ENCODE measurements at regions of chr2 and their contacts with region 1.

Region 1: GRCh38 chr2:38581193-38582147 is 21.3 kb downstream of the HNRNPLL start:
- DNase-seq: no peak
- ATAC-seq: peak; percentile 71
- H3K4me3 Mint-ChIP-seq: no peak overlapping the region
- H3K27ac Mint-ChIP-seq: no peak overlapping the region
- H3K4me1 Mint-ChIP-seq: no peaks in the 10 kb centered on the region
- H3K27me3 Mint-ChIP-seq: peaks cover 15% of the 10 kb centered on the region
- CTCF ChIP-seq: no peak

Region 2: DNA sequence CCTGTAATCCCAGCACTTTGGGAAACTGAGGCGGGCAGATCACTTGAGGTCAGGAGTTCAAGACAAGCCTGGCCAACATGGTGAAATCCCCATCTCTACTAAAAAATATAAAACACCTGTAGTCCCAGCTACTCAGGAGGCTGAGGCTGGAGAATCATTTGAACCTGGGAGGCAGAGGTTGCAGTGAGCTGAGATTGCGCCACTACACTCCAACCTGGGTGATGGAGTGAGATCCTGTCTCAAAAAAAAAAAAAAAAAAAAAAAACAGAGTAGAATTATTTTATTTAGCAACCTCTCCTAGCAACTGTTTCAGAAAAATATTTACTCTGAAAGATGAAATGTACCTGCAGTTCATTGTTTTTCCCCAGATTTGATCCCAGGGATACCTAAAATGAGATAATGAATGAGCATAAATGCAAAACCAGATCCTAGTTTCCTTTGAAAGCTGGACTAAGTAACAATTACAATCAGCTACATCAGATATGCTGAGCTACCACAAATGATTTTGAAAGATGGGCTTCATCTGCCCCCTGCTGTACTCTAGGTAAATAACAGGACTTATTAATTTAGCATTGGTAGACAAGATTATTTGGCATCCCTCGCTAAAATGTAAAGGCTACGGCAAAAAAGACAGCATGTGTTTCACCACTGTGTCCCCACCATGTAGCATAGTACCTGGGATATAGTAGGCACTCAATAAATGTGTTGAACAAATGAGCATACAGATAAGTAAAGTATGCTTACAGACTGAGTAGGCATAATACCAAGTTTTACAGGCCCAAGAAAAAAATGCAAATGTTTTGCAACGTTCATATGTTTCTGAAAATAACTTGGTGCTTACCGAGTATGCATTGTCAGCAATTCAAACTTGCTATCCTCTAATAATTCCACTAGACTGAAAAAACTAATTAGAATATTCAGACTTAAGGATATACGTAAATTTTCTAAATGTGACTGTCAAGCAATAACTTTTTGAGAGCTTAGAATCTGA is 306.9 kb before region 1 on chr2:
- CTCF ChIA-PET with region 1: no interaction called
- POLR2A ChIA-PET with region 1: no interaction called
- intact Hi-C with region 1: no loop called
- DNase-seq: no peak
- ATAC-seq: peak; percentile 56
- H3K4me3 Mint-ChIP-seq: no peak overlapping the region
- H3K27ac Mint-ChIP-seq: no peak overlapping the region
- H3K4me1 Mint-ChIP-seq: peaks cover 3% of the 10 kb centered on the region
- H3K27me3 Mint-ChIP-seq: no peaks in the 10 kb centered on the region
- CTCF ChIP-seq: no peak

Region 3: GRCh38 chr2:38315707-38316333 is 265.6 kb before region 1 on chr2:
- CTCF ChIA-PET with region 1: interaction called, 9 read pairs
- POLR2A ChIA-PET with region 1: no interaction called
- intact Hi-C with region 1: loop called (anchors 5 kb)
- DNase-seq: no peak
- ATAC-seq: peak; percentile 28
- H3K4me3 Mint-ChIP-seq: no peak overlapping the region
- H3K27ac Mint-ChIP-seq: no peak overlapping the region
- H3K4me1 Mint-ChIP-seq: no peaks in the 10 kb centered on the region
- H3K27me3 Mint-ChIP-seq: no peaks in the 10 kb centered on the region
- CTCF ChIP-seq: peak; percentile 40

Region 4: GRCh38 chr2:38602732-38603401 is 21.4 kb after region 1 on chr2 and contains the start of gene HNRNPLL:
- CTCF ChIA-PET with region 1: interaction called, 11 read pairs
- POLR2A ChIA-PET with region 1: interaction called, 3 read pairs
- intact Hi-C with region 1: loop called (anchors 2 kb)
- DNase-seq: peak; percentile 84
- ATAC-seq: peak; percentile 87
- H3K4me3 Mint-ChIP-seq: peak within 1 kb of the TSS; percentile 89
- H3K27ac Mint-ChIP-seq: peak within 1 kb of the TSS; percentile 65
- H3K4me1 Mint-ChIP-seq: peaks cover 20% of the 10 kb centered on the region
- H3K27me3 Mint-ChIP-seq: peaks cover 38% of the 10 kb centered on the region
- CTCF ChIP-seq: no peak
- total RNA-seq, gene HNRNPLL: 8.6 and 8.8 TPM in 2 replicates

Region 5: DNA sequence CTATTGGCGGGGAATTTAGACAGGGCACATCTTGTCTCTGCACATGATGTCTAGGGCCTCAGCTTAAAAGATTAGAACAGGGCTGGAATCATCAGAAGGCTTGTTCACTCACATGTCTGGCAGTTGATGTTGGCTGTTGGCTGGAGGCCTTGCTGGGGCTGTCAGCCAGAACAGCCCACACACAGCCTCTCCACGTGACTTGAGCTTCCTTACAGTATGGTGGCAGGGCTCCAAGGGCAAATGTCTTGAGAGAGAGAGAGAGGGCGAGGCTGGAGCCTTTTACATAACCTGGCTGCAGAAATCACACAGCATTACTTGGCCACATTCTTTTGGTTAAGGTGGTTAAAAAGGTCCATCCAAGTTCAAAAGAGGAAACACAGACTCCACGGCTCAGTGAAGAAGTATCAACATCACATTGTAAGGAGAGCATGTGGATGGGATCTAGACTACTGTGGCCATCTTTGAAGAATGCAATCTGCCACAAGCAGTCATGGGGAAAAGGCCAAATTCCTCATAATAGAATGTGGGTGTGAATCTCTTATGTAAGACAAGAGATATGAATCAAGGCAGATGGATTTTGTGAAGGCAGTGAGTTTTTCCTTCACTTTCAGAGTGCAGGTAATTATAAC is 139.3 kb after region 1 on chr2:
- CTCF ChIA-PET with region 1: interaction called, 25 read pairs
- POLR2A ChIA-PET with region 1: no interaction called
- intact Hi-C with region 1: loop called (anchors 1 kb)
- DNase-seq: no peak
- ATAC-seq: no peak
- H3K4me3 Mint-ChIP-seq: no peak overlapping the region
- H3K27ac Mint-ChIP-seq: no peak overlapping the region
- H3K4me1 Mint-ChIP-seq: peaks cover 32% of the 10 kb centered on the region
- H3K27me3 Mint-ChIP-seq: no peaks in the 10 kb centered on the region
- CTCF ChIP-seq: no peak

Region 6: GRCh38 chr2:38740851-38741731 is 159.6 kb after region 1 on chr2:
- CTCF ChIA-PET with region 1: interaction called, 75 read pairs
- POLR2A ChIA-PET with region 1: interaction called, 3 read pairs
- intact Hi-C with region 1: loop called (anchors 1 kb)
- DNase-seq: no peak
- ATAC-seq: peak; percentile 18
- H3K4me3 Mint-ChIP-seq: no peak overlapping the region
- H3K27ac Mint-ChIP-seq: peak overlapping the region; percentile 61
- H3K4me1 Mint-ChIP-seq: peaks cover 29% of the 10 kb centered on the region
- H3K27me3 Mint-ChIP-seq: no peaks in the 10 kb centered on the region
- CTCF ChIP-seq: no peak

Region 7: DNA sequence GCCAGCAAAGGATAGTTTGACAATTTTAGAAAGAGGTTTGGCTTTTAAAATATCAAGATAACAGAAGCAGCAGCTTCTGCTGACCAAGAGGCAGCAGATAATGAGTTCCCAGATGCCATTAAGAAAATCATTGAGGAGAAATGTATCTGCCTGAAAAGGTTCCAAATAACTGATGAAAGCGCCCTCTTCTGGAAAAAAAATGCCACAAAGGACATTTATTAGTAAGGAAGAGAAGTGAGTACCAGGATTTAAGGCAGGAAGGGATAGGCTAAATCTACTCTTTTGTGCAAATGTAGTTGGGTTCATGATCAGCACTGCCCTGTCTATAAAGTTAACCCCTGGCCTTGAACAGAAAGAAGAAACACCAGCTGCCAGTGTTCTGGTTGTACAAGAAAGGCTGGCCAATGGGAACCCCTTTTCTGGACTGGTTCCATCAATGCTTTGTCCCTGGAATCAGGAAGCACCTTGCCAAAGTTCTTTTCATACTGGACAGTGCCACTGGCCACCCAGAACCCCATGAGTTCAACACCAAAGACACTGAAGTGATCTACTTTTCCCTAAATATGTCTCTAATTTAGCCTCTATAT is 253.6 kb after region 1 on chr2:
- CTCF ChIA-PET with region 1: interaction called, 6 read pairs
- POLR2A ChIA-PET with region 1: no interaction called
- intact Hi-C with region 1: loop called (anchors 5 kb)
- DNase-seq: no peak
- ATAC-seq: no peak
- H3K4me3 Mint-ChIP-seq: no peak overlapping the region
- H3K27ac Mint-ChIP-seq: peak overlapping the region; percentile 93
- H3K4me1 Mint-ChIP-seq: peaks cover 40% of the 10 kb centered on the region
- H3K27me3 Mint-ChIP-seq: no peaks in the 10 kb centered on the region
- CTCF ChIP-seq: no peak

Region 8: DNA sequence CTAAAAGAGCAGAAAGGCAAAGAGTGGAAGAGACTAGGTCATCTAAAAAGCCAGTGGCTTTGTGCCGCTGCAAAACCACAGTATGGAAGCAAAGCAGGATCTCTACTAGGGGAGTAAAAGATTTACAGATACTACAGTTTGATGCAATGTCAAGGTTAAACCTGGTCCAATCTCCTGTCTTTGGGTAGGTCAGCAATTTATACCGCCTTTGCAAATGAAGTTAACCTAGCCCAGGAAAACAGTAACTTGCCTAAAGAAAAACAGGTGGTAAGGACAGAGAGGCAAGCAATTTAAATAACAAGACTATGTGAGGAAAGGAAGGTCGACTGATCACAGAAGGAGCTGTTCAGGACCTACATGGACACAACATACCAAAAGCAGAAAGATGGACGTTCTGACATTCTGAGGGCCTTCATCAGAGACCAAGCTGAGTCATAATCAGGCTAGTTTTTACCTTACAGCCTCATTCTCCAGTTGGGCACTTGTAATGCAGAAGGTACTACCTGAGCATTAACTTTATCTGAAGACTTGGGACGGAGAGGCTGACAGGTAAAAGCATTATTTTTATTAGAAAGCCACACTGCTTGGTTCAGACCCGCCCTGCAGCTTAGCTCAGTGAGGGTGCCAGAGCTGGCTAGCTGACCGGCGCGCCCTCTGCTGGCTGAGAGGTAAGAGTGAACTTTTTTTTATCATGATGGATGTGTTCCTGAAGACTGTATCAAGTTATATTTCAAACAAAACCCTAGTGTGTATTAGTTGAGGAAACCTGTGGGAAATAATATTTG is 646.4 kb after region 1 on chr2:
- CTCF ChIA-PET with region 1: interaction called, 9 read pairs
- POLR2A ChIA-PET with region 1: no interaction called
- intact Hi-C with region 1: loop called (anchors 1 kb)
- DNase-seq: peak; percentile 69
- ATAC-seq: peak; percentile 87
- H3K4me3 Mint-ChIP-seq: peak overlapping the region; percentile 73
- H3K27ac Mint-ChIP-seq: no peak overlapping the region
- H3K4me1 Mint-ChIP-seq: peaks cover 15% of the 10 kb centered on the region
- H3K27me3 Mint-ChIP-seq: no peaks in the 10 kb centered on the region
- CTCF ChIP-seq: peak; percentile 86

Region 9: GRCh38 chr2:39379643-39380524 is 798.4 kb after region 1 on chr2:
- CTCF ChIA-PET with region 1: no interaction called
- POLR2A ChIA-PET with region 1: no interaction called
- intact Hi-C with region 1: no loop called
- DNase-seq: no peak
- ATAC-seq: peak; percentile 35
- H3K4me3 Mint-ChIP-seq: no peak overlapping the region
- H3K27ac Mint-ChIP-seq: no peak overlapping the region
- H3K4me1 Mint-ChIP-seq: peaks cover 30% of the 10 kb centered on the region
- H3K27me3 Mint-ChIP-seq: no peaks in the 10 kb centered on the region
- CTCF ChIP-seq: no peak

Measured in activated B cell treated with CpG ODN at 0.5 μM for 24 hours (primary cell).